Cardiac septum (tissue), 1 donor: ENCODE measurements at regions of chr7 and their contacts with region 1.

Region 1: DNA sequence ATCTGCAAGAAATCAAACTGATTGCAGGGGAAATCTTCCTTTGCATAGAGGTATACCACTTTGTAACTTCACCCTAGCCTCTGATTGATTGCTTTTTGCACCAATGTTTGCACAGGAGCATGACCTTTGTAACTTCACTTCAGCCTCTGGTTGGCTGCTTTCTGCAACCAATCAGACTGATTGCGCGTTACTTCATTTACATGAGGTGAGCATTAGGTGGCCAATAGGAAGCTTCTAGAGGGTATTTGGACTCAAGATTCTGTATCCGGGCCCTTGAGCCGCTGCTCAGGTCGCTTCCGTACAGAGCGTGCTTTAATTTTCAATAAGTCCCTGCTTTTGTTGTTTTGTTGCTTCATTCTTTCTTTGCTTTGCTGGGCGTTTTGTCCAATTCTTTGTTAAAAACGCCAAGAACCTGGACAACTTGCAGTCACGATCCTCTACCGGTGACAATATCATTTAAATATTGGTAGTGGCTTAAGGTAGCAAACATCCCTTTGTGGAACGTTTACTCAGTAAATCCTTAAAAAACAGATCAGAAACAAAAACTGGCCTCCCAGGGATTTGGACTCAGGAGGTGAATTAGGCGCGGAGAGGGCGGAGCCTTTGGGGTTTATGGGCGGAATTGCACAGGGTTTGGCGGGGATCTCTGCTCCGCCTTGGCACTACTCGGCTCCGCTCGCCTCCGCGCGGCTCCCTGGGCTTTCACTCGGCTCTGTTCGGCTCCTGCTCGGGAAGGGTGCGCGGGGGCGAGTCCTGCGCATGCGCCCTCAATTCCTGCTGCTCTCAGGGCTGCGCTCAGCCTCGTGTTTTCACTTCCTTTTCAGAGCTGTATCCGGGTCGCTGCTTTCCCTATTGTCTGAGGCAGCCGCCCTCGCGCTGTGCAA is at the start of gene PHF14:
- DNase-seq: peak; percentile 98
- total RNA-seq, gene PHF14: 15.6 TPM

Region 2: DNA sequence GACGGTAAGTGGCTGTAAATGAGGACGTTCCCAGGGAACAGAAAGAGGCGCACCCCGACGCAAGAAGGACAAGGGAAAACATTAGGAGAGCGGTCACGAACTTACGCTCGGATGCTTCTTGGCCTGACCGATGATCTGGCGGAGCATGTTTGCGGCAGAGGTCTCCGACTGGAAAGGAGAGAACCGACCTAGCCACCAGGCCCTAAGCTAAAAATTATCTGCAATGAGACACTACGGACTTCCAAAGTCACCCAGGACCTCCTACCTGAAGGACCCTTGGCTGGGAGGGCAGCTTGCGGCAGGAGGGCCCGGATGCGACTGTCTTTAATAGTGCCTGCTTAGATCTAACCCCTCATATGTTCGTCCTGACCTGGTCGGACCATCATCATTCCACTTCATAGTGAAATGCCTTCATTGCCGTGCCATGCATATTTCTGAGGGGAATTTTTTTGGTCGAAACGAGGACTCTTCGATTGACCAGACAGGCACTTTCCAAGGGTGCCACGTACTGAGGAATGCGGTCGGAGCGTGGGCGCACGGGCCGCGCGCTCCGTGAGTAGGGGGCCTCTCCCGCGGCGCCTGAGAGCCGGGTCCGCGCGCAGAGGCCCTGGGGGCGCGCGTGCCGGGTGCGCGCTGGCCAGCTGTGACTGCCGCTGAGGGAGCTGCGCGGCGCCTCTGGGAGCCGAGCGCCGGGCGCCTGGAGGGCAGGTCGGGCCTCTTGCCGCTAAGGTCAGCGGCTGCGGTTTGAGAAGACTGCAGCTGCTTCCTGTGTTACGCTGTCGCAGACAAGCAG is 33.2 kb before region 1 on chr7:
- intact Hi-C with region 1: loop called (anchors 1 kb)
- DNase-seq: peak; percentile 92